Testis (tissue), 5 donors: ENCODE measurements at regions of chr2 and their contacts with region 1.

Region 1: DNA sequence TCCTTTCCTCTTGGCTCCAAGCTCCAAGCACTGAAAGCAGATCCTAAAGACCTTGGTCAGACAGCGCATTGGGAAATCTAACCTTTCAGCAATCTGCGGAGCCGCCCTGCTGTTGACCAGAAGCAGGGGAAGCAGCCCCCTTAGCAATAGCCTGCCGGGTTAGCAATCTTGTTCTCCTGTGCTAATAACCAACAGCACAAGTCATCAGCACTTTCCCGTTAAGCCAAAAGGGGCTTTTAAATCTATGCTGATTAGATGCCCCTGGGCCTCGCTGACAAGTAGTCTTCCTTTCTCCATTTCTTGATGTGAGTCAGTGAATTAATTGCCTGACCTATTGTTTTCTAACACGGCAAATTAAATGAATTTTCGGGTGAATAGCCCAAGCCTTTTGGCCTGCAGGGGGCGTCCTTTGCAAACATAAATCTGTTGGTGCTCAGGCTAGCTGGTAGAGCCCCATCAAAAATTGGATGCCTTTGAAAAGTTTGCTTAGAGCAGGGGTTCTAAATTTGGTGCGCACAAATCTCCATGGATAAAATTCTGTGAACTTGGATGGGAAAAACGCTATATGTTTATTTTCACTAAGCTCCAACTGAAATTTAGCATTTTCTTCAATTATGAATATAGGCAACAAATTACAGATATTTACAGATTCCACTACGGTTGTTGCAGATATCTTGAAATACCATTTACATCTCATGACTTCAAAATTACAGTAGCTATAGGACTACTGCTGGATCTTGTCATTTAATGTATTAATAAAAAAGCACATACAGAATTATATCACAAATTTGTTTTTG is 24.6 kb downstream of the MAIP1 start:
- DNase-seq: peak; percentile 94
- H3K4me3 ChIP-seq: no peak overlapping the region
- H3K27ac ChIP-seq: peak overlapping the region in 1 of 2 donors; percentile 13
- H3K4me1 ChIP-seq: no peaks in the 10 kb centered on the region
- H3K27me3 ChIP-seq: no peaks in the 10 kb centered on the region
- CTCF ChIP-seq: peak; percentile 91 to 96 (median 92)
- POLR2A ChIP-seq: no peak

Region 2: DNA sequence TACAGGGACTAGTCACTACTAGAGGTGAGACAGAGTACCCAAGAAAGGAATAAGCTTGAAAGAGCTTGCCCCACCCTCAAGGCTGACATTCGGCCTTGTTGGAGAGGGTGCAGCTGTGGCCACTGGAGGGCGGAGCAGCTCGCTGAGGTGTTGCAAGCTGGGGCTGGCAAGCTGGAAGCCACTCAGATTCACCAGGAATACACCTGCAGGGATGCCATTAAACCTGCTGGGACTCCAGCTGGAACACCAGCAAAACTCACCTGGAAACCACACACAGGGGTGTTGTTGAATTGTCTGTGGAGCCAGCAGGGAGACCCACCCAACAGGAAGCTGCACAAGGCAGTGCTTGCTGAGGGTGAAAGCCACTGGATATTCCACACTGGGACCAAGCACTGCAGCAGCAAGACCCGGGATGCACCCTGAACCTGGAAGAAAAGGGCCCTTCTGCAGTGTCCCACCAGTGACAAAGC is 503.7 kb after region 1 on chr2:
- intact Hi-C with region 1: loop called (anchors 5 kb)
- DNase-seq: peak; percentile 50
- H3K4me3 ChIP-seq: no peak overlapping the region
- H3K27ac ChIP-seq: no peak overlapping the region
- H3K4me1 ChIP-seq: peaks cover 7% of the 10 kb centered on the region
- H3K27me3 ChIP-seq: no peaks in the 10 kb centered on the region
- CTCF ChIP-seq: no peak
- POLR2A ChIP-seq: no peak